Activated B cell treated with CpG ODN at 0.5 μM for 24 hours (primary cell): ENCODE measurements at regions of chr12 and their contacts with region 1.

Region 1: DNA sequence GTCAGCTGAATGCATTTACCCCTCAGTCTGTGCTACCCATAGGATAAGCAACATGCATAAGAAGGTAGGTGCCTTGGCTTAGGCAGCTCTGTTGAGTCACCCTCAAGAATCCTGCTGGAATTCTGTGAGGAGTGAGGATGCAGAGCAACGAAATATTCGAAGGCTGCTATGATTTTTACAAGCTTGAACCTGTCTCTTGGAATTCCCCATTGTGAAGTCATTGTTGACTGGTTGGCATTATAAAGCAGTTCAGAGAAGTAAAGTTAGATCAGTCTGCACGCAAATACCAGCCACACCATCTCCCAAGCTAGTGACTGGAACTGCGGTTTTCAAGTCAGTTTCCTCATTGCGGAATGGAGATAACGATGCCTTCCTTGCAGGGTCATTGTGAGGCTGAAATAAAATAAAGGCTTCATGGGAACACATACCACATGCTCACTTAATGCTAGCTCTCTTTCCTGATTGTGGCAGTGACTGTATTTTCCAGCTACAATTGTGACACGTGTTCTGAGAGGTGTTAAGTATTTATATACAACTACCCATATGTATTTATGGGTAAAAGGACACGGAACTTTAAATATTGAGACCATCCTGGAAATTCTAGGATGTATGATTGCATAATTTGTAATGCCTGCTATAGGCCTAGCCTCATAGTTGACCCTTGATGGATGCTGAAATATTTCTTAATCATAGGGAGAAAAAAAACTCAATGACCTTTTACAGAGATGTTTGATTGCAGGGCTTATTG is 96.7 kb downstream of the ETV6 start:
- DNase-seq: no peak
- ATAC-seq: peak; percentile 73
- H3K4me3 Mint-ChIP-seq: peak overlapping the region; percentile 67
- H3K27ac Mint-ChIP-seq: peak overlapping the region; percentile 93
- H3K4me1 Mint-ChIP-seq: peaks cover 97% of the 10 kb centered on the region
- H3K27me3 Mint-ChIP-seq: no peaks in the 10 kb centered on the region
- CTCF ChIP-seq: no peak

Region 2: DNA sequence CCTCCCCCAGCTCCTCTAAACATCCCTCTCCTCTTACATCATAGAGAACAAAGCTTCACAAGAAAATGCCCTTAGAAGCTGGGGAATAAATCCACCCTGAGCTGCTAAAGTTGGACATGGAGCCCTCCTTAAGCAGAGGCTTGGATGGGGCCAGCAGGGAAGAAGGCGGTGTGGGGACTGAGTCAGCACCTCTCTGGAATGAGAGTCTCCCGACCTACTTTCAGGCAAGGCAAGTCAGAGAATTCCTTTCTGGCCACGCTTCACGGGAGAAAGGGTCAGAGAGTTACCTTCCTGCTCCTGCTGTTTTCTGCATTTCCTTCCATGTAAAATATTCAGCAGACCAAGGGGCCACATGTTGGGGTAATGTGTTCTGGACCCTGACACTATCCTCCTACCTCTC is 237.5 kb before region 1 on chr12:
- CTCF ChIA-PET with region 1: no interaction called
- POLR2A ChIA-PET with region 1: no interaction called
- intact Hi-C with region 1: no loop called
- DNase-seq: no peak
- ATAC-seq: no peak
- H3K4me3 Mint-ChIP-seq: no peak overlapping the region
- H3K27ac Mint-ChIP-seq: no peak overlapping the region
- H3K4me1 Mint-ChIP-seq: no peaks in the 10 kb centered on the region
- H3K27me3 Mint-ChIP-seq: peaks cover 12% of the 10 kb centered on the region
- CTCF ChIP-seq: no peak

Region 3: DNA sequence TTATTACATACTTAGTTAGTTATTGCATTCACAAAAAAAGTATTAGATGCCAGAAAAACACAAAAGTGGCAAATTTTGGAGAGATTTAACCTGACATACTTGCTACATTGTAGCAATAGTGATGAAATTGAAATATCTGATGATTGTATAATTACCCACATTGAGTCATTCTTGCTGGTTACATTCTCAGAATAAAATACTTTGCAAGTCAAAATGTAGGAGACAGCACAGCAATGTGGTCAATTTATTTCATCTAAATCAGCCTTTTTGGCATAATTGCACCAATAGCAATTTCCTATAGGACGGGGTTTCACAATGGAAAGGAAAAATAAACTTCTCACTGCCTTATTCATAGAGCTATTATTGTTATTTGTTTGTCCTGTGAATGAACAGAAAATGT is 221.8 kb before region 1 on chr12:
- CTCF ChIA-PET with region 1: no interaction called
- POLR2A ChIA-PET with region 1: no interaction called
- intact Hi-C with region 1: no loop called
- DNase-seq: no peak
- ATAC-seq: no peak
- H3K4me3 Mint-ChIP-seq: no peak overlapping the region
- H3K27ac Mint-ChIP-seq: no peak overlapping the region
- H3K4me1 Mint-ChIP-seq: no peaks in the 10 kb centered on the region
- H3K27me3 Mint-ChIP-seq: peaks cover 10% of the 10 kb centered on the region
- CTCF ChIP-seq: no peak

Region 4: DNA sequence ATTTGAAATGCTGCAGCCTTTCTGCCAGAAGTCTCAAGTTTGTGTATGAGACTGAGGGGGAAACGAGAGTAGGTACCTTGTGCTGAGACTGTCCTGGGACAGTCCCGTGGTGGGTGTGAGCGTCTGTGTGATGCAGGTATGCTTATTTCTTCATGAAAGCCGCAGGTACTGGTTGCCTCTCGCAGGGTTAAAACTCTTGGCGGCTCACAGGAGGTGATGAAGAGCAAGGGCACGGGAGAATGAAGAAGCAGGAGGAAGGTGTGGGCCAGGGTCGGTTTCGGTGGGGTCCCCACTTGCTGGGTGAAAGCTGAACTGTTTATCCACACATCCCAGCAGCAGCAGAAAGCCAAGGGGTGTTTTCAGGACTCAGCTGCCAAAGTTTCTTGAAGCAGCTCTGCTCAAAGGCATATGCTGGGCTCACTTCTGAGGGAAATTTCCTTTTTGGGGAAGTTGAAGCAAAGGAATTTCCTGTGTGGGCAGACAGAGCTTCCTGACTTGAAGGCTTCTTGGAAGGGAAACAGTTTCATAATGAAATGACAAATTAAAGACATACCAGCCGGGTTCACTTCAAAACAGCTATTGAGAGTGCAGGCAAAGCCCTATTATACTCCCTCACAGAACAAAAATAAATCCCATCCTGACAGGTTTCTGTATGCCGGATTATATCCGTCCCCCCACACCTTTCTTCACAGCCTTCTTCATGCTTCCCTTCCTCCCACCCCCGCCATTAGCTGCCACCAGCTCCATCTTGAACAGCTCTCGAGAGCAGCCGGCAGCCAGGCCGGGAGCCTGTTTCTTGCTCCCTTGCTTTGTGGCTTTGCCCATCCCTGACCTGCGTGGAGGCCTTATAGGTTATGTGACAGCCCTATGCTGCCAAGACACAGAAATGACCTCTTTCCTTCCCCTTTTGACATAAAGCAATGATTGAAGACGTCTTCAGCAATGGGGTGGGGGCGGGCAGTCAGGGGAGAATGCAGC is 19.9 kb after region 1 on chr12:
- CTCF ChIA-PET with region 1: interaction called, 8 read pairs
- POLR2A ChIA-PET with region 1: interaction called, 433 read pairs
- intact Hi-C with region 1: loop called (anchors 1 kb)
- DNase-seq: peak; percentile 48
- ATAC-seq: peak; percentile 84
- H3K4me3 Mint-ChIP-seq: peak overlapping the region; percentile 77
- H3K27ac Mint-ChIP-seq: peak overlapping the region; percentile 93
- H3K4me1 Mint-ChIP-seq: peaks cover 92% of the 10 kb centered on the region
- H3K27me3 Mint-ChIP-seq: no peaks in the 10 kb centered on the region
- CTCF ChIP-seq: no peak

Region 5: DNA sequence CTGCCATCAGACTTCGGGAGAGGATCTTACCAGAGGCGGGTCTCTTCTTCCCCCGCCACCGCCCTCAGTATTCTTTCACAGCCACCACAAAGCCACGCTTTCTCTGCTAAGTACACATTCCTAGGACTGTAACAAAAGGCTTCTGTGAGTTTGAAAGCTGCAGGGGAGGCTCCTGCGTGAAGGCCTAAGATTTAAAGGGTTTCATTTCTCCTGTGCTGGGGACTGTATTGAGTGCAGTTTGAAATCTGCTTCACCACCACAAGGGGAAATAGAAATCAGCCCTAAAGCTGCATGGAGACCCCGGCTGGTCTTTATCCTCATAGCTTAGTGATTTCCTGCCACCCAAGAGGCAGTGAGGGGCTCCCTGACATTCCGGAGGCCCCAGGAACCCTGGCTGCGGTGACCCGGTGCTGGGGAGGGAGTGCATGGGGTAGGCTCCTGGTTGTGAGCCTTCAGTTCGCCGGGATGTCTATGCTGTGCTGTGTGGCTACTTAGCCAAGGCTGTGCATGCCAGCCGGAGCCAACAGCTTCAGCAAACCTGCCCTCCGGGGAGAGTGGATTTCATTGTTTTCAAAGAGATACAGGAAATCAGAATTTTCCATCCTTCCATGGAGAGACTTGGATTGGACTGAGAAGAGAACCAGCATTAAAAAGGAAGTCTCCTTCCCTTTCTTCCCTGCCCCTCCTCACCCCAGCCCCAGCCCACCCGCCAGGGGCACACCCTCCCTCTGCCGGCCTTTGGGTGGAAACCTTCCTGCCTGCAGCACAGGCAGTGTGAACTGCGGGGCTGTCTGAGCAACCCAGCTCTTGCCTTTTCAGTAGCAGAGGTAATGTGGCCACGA is 66.6 kb after region 1 on chr12:
- CTCF ChIA-PET with region 1: interaction called, 8 read pairs
- POLR2A ChIA-PET with region 1: interaction called, 7 read pairs
- intact Hi-C with region 1: loop called (anchors 5 kb)
- DNase-seq: peak; percentile 32
- ATAC-seq: peak; percentile 83
- H3K4me3 Mint-ChIP-seq: peak overlapping the region; percentile 65
- H3K27ac Mint-ChIP-seq: peak overlapping the region; percentile 87
- H3K4me1 Mint-ChIP-seq: peaks cover 66% of the 10 kb centered on the region
- H3K27me3 Mint-ChIP-seq: no peaks in the 10 kb centered on the region
- CTCF ChIP-seq: no peak

Region 6: GRCh38 chr12:11836282-11837151 is 90.3 kb after region 1 on chr12:
- CTCF ChIA-PET with region 1: no interaction called
- POLR2A ChIA-PET with region 1: interaction called, 12 read pairs
- intact Hi-C with region 1: loop called (anchors 1 kb)
- DNase-seq: peak; percentile 73
- ATAC-seq: peak; percentile 94
- H3K4me3 Mint-ChIP-seq: peak overlapping the region; percentile 73
- H3K27ac Mint-ChIP-seq: peak overlapping the region; percentile 95
- H3K4me1 Mint-ChIP-seq: peaks cover 81% of the 10 kb centered on the region
- H3K27me3 Mint-ChIP-seq: no peaks in the 10 kb centered on the region
- CTCF ChIP-seq: no peak

Region 7: DNA sequence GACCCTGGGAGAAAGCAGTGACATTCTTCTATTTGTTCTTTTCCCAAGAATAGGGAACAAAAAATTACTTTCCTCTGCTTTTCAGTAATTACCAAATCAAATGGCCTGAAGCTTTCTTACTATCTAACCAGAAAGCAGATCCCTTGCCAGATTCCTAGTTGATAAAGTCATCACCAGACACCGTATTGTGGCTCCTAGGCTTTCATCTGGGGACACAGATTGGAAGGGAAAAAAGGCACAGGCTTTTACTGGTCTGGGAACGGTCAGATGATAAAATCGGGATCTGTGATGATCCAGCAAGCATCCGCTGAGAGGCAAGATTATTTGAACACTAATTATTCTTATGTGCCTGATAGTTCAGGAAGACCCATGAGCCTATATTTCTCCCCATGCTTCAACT is 245.4 kb after region 1 on chr12:
- CTCF ChIA-PET with region 1: no interaction called
- POLR2A ChIA-PET with region 1: interaction called, 10 read pairs
- intact Hi-C with region 1: no loop called
- DNase-seq: no peak
- ATAC-seq: no peak
- H3K4me3 Mint-ChIP-seq: no peak overlapping the region
- H3K27ac Mint-ChIP-seq: no peak overlapping the region
- H3K4me1 Mint-ChIP-seq: no peaks in the 10 kb centered on the region
- H3K27me3 Mint-ChIP-seq: no peaks in the 10 kb centered on the region
- CTCF ChIP-seq: no peak

Region 8: DNA sequence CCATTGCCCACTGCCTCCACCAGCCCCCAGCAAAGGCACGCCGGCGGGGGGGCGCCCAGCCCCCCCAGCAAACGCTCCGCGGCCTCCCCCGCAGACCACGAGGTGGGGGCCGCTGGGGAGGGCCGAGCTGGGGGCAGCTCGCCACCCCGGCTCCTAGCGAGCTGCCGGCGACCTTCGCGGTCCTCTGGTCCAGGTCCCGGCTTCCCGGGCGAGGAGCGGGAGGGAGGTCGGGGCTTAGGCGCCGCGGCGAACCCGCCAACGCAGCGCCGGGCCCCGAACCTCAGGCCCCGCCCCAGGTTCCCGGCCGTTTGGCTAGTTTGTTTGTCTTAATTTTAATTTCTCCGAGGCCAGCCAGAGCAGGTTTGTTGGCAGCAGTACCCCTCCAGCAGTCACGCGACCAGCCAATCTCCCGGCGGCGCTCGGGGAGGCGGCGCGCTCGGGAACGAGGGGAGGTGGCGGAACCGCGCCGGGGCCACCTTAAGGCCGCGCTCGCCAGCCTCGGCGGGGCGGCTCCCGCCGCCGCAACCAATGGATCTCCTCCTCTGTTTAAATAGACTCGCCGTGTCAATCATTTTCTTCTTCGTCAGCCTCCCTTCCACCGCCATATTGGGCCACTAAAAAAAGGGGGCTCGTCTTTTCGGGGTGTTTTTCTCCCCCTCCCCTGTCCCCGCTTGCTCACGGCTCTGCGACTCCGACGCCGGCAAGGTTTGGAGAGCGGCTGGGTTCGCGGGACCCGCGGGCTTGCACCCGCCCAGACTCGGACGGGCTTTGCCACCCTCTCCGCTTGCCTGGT is 970.8 kb after region 1 on chr12 and contains the start of gene CDKN1B:
- CTCF ChIA-PET with region 1: no interaction called
- POLR2A ChIA-PET with region 1: no interaction called
- intact Hi-C with region 1: loop called (anchors 5 kb)
- DNase-seq: peak; percentile 75
- ATAC-seq: peak; percentile 70
- H3K4me3 Mint-ChIP-seq: peak within 1 kb of the TSS; percentile 98
- H3K27ac Mint-ChIP-seq: peak within 1 kb of the TSS; percentile 97
- H3K4me1 Mint-ChIP-seq: peaks cover 67% of the 10 kb centered on the region
- H3K27me3 Mint-ChIP-seq: no peaks in the 10 kb centered on the region
- CTCF ChIP-seq: no peak
- total RNA-seq, gene CDKN1B: 56.6 and 59.0 TPM in 2 replicates